Mammary epithelial cell (primary cell): ENCODE measurements at regions of chr22 and their contacts with region 1.

Region 1: DNA sequence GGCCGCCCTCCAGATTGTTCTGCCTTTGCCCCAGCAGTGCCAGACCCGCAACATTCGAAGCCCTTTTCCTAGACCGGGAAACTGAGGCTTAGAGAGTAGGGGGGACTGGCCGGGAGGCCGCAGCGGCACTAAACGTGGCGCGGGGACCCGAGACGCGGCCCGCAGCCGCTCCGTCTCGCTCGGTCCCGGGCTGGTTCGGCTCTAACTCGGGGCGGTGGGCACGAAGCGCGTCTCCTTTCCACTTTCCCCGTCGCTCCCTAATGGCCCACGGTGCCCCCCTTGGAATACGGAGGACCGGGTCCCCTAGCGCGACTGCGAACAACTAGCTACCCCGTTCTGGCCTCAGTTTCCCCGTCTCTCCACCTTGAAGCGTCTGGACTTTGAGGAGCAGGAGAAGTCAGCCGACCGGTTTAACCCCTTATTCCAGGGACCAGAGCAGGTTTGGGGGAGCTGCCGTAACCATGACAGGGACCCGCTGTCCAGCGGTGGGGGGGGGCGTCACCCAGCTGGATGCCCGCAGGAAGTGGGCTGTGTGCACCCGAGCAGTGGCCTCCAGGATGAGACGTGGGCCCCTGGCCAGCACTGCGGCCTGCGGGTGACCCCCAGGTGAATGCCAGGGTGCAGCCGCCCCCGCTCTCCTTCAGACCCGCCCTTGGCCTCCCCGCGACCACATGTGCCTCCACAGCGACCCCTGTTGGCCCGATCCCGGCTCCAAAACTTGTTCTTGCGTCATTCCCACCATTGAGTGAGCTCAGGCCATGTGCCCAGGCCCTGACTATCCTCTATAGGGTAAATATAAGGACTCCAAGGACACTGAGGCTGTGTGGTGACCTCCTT is 1.1 kb downstream of the CDC42EP1 start:
- DNase-seq: peak; percentile 89
- H3K4me3 ChIP-seq: peak overlapping the region; percentile 71 to 91 (median 78)
- H3K27ac ChIP-seq: peak overlapping the region; percentile 90
- H3K4me1 ChIP-seq: peaks cover 46% of the 10 kb centered on the region
- H3K27me3 ChIP-seq: no peaks in the 10 kb centered on the region
- CTCF ChIP-seq: peak; percentile 79 to 88

Region 2: DNA sequence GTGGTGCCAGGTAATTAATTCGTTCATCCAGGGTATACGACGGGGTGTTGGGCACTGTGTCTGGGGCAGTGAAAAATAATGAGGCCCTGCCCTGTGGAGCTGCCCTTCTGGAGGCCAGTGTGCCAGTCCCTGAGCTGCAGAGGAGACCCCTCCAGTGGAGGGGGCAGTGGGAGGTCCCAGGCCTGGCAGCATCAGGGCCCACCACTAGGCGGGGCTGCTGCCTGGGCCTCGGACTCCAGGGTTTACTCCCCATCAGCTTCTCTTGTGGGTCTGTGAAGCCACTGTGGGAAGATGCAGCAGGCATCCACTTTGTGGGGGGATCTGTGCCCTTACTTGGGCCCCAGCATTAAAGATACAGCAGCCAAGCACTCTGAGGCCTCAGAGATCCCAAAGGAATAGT is 434.5 kb before region 1 on chr22:
- CTCF ChIA-PET with region 1: no interaction called
- dilution Hi-C with region 1: no loop called
- in situ Hi-C with region 1: no loop called
- intact Hi-C with region 1: no loop called
- DNase-seq: no peak
- H3K4me3 ChIP-seq: no peak overlapping the region
- H3K27ac ChIP-seq: no peak overlapping the region
- H3K4me1 ChIP-seq: peaks cover 13% of the 10 kb centered on the region
- H3K27me3 ChIP-seq: no peaks in the 10 kb centered on the region
- CTCF ChIP-seq: peak; percentile 12 to 39

Region 3: DNA sequence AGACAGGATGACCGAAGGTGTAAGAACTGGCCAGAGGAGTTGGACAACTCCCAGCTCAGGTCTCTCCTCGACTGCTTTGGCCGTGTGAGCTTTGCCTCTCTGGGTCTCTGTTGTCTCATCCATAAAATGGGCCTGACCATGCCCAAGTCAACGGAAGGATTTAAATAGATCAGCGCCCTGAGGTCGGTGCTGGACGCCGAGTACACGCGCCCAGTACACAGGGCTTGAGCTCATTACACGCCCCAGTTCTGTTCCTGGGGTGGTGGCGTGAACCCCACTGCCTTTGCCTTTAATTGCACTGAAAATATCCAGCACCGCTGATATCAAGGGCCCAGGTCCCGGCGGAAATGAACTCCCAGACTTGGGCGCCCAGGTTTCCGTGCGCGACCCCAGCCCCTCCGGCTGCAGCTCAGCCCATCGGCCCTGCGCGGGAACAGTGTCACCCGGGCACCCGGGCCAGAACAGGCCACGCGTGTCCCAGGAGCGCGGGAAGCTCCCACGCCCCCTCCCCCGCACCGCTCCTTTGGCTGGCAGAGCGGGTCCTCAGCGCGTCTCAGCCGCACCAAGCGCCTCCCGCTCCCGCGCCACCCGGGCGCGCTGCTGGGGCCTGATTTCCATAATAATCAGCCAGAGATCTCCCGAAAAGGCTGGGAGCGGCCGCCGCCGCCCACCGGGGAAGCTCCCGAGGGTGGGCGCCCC is 236.9 kb before region 1 on chr22:
- CTCF ChIA-PET with region 1: no interaction called
- dilution Hi-C with region 1: loop called (anchors 5 kb)
- in situ Hi-C with region 1: no loop called
- intact Hi-C with region 1: loop called (anchors 10 kb)
- DNase-seq: no peak
- H3K4me3 ChIP-seq: no peak overlapping the region
- H3K27ac ChIP-seq: no peak overlapping the region
- H3K4me1 ChIP-seq: peaks cover 37% of the 10 kb centered on the region
- H3K27me3 ChIP-seq: no peaks in the 10 kb centered on the region
- CTCF ChIP-seq: no peak

Region 4: GRCh38 chr22:37525073-37525748 is 36.2 kb before region 1 on chr22:
- CTCF ChIA-PET with region 1: no interaction called
- dilution Hi-C with region 1: no loop called
- in situ Hi-C with region 1: no loop called
- intact Hi-C with region 1: loop called (anchors 5 kb)
- DNase-seq: peak; percentile 94
- H3K4me3 ChIP-seq: no peak overlapping the region
- H3K27ac ChIP-seq: peak overlapping the region; percentile 97
- H3K4me1 ChIP-seq: peaks cover 32% of the 10 kb centered on the region
- H3K27me3 ChIP-seq: no peaks in the 10 kb centered on the region
- CTCF ChIP-seq: no peak

Region 5: GRCh38 chr22:37581504-37581903 is 20.1 kb after region 1 on chr22:
- CTCF ChIA-PET with region 1: no interaction called
- dilution Hi-C with region 1: no loop called
- in situ Hi-C with region 1: no loop called
- intact Hi-C with region 1: no loop called
- DNase-seq: no peak
- H3K4me3 ChIP-seq: no peak overlapping the region
- H3K27ac ChIP-seq: no peak overlapping the region
- H3K4me1 ChIP-seq: peaks cover 3% of the 10 kb centered on the region
- H3K27me3 ChIP-seq: peaks cover 1% of the 10 kb centered on the region
- CTCF ChIP-seq: no peak

Region 6: DNA sequence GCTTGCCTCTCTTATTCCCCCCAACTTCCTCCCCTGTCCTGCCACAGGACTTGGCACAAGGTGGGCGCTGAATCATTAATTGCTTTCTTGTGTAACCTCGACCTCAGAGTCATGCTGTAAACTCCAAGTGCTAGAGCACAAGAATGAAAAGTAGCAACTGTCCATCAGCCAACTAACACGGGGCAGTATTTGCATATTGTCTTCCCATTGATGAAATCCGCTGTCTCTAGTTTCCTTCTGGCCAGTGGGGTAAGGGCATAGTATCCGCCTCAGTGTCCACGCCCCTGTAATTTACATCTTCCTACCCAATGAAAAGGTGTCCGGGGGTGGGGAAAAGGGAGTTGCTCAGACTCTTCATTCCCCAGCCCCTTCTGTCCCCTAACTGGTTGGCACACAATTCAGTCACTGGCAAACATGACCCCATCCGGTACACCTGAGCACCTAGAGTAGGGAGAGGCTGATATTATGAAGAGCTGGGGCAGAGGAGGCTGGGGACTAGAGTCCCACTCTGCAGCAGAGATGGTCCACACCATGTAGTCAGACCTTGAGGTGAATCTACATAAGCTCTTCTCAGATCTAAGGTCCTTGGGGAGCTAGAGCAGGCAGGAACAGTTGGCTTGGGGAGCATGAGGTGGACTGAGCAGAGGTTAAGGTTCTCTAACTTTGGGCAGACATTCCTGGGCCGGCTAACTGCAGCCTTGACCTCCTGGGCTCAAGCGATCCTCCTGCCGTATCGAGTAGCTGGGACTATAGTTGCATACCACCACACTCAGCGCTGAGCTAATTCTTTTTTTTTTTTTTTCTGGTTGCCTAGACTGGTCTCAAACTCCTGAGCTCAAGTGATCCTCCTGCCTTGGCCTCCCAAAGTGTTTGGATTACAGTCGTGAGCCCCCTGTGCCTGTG is 40.4 kb after region 1 on chr22:
- CTCF ChIA-PET with region 1: no interaction called
- dilution Hi-C with region 1: loop called (anchors 5 kb)
- in situ Hi-C with region 1: no loop called
- intact Hi-C with region 1: no loop called
- DNase-seq: peak; percentile 67
- H3K4me3 ChIP-seq: no peak overlapping the region
- H3K27ac ChIP-seq: no peak overlapping the region
- H3K4me1 ChIP-seq: peaks cover 1% of the 10 kb centered on the region
- H3K27me3 ChIP-seq: no peaks in the 10 kb centered on the region
- CTCF ChIP-seq: no peak